ENCODE measurements at regions of chr4 and their contacts with region 1.

Region 1: GRCh38 chr4:112145326-112145819 is at the start of gene FAM241A:
- DNase-seq: peak; percentile 86 to 92 (median 91)
- H3K4me3 ChIP-seq: peak within 1 kb of the TSS; percentile 67
- H3K27ac ChIP-seq: peak within 1 kb of the TSS; percentile 60 to 80
- H3K4me1 ChIP-seq: peaks cover 1% of the 10 kb centered on the region
- H3K27me3 ChIP-seq: no peaks in the 10 kb centered on the region
- CTCF ChIP-seq: no peak
- EP300 ChIP-seq: no peak
- POLR2A ChIP-seq: peak; percentile 84
- total RNA-seq, gene FAM241A: 1.0 to 2.5 (median 2.0) TPM

Region 2: GRCh38 chr4:112093636-112094202 is 51.7 kb before region 1 on chr4:
- intact Hi-C with region 1: no loop called
- DNase-seq: no peak
- H3K4me3 ChIP-seq: no peak overlapping the region
- H3K27ac ChIP-seq: no peak overlapping the region
- H3K4me1 ChIP-seq: no peaks in the 10 kb centered on the region
- H3K27me3 ChIP-seq: no peaks in the 10 kb centered on the region
- CTCF ChIP-seq: no peak
- EP300 ChIP-seq: no peak
- POLR2A ChIP-seq: no peak

Region 3: GRCh38 chr4:112231779-112232713 is 86.7 kb after region 1 on chr4 and contains the start of gene AP1AR:
- intact Hi-C with region 1: loop called in 2 of 4 experiments (anchors 2 to 10 kb)
- DNase-seq: peak; percentile 79 to 89 (median 88)
- H3K4me3 ChIP-seq: peak within 1 kb of the TSS; percentile 99
- H3K27ac ChIP-seq: peak within 1 kb of the TSS; percentile 92 to 93
- H3K4me1 ChIP-seq: no peaks in the 10 kb centered on the region
- H3K27me3 ChIP-seq: no peaks in the 10 kb centered on the region
- CTCF ChIP-seq: peak; percentile 24 to 51 (median 38)
- EP300 ChIP-seq: no peak
- POLR2A ChIP-seq: peak; percentile 63
- total RNA-seq, gene AP1AR: 16.5 to 27.0 (median 19.9) TPM

Region 4: GRCh38 chr4:113499696-113500095 is 1354.3 kb after region 1 on chr4:
- intact Hi-C with region 1: no loop called
- DNase-seq: no peak
- H3K4me3 ChIP-seq: no peak overlapping the region
- H3K27ac ChIP-seq: no peak overlapping the region
- H3K4me1 ChIP-seq: peaks cover 8% of the 10 kb centered on the region
- H3K27me3 ChIP-seq: no peaks in the 10 kb centered on the region
- CTCF ChIP-seq: no peak
- EP300 ChIP-seq: no peak
- POLR2A ChIP-seq: no peak